Activated CD4-positive, alpha-beta memory T cell treated with anti-CD3 and anti-CD28 coated beads for 36 hours (primary cell): ENCODE measurements at regions of chr9 and their contacts with region 1.

Region 1: GRCh38 chr9:104682642-104683041 is 11.7 kb upstream of the OR13D1 start:
- DNase-seq: no peak
- H3K4me3 Mint-ChIP-seq: no peak overlapping the region
- H3K27ac Mint-ChIP-seq: no peak overlapping the region
- H3K4me1 Mint-ChIP-seq: no peaks in the 10 kb centered on the region
- H3K27me3 Mint-ChIP-seq: peaks cover 4% of the 10 kb centered on the region

Region 2: DNA sequence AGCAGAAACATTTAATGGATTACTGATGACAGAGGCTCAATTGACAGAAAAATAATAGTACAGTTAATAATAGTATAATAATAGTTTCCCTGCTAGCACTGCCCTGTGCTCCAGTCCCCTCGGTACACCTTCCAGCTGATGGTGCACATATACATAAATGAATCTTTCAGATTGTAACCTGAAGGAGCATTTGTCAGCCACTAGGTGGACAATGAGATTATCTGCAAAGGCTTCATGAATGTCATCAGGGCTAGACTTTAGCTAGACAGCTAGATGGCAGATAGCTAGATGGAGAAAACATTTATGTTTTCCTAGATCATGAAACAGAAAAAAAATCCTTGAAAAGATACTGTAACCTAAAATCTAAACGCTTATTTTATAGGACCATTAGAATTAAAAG is 893.0 kb before region 1 on chr9:
- CTCF ChIA-PET with region 1: no interaction called
- POLR2A ChIA-PET with region 1: no interaction called
- intact Hi-C with region 1: loop called (anchors 5 kb)
- DNase-seq: no peak
- H3K4me3 Mint-ChIP-seq: no peak overlapping the region
- H3K27ac Mint-ChIP-seq: no peak overlapping the region
- H3K4me1 Mint-ChIP-seq: peaks cover 4% of the 10 kb centered on the region
- H3K27me3 Mint-ChIP-seq: no peaks in the 10 kb centered on the region

Region 3: DNA sequence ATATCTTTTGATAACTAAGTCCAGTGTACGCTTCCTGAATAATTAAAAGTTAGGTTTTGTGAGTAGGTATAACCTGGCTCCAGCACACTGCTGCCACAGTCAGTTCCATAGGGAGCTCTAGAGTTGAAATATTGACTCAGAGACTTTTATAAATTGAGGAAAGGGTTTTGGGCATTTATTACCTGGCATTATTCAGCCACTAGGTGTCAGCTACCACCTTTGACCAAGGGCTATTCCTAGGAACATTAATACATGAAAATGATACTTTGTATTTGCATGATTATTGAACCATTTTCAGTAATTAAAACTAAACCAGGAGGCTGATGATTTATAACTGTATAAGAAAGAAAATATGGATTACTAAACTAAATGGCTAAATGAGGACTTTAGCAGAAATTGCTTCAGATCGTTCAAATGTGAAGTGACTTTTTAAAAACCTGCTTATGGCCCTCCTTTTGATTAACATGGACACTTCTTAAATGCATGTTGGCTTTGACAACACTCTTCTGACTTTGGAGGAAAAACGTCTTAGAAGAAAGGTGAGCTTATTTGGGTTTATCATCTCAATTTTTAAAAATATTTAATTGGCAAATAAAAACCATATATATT is 505.5 kb before region 1 on chr9:
- CTCF ChIA-PET with region 1: no interaction called
- POLR2A ChIA-PET with region 1: no interaction called
- intact Hi-C with region 1: loop called (anchors 10 kb)
- DNase-seq: no peak
- H3K4me3 Mint-ChIP-seq: no peak overlapping the region
- H3K27ac Mint-ChIP-seq: no peak overlapping the region
- H3K4me1 Mint-ChIP-seq: no peaks in the 10 kb centered on the region
- H3K27me3 Mint-ChIP-seq: peaks cover 1% of the 10 kb centered on the region